ENCODE measurements at regions of chr12 and their contacts with region 1.

Region 1: GRCh38 chr12:110371408-110372055 is 32.0 kb downstream of the ANAPC7 start:
- DNase-seq: no peak
- ATAC-seq: no peak
- H3K4me3 ChIP-seq: no peak overlapping the region
- H3K27ac ChIP-seq: no peak overlapping the region
- H3K4me1 ChIP-seq: peaks cover 9% of the 10 kb centered on the region
- H3K27me3 ChIP-seq: no peaks in the 10 kb centered on the region
- CTCF ChIP-seq: no peak
- POLR2A ChIP-seq: no peak
- RAD21 ChIP-seq: no peak

Region 2: GRCh38 chr12:110330544-110330943 is 41.0 kb before region 1 on chr12:
- CTCF ChIA-PET with region 1: no interaction called
- POLR2A ChIA-PET with region 1: interaction called, 16 read pairs
- dilution Hi-C with region 1: no loop called
- in situ Hi-C with region 1: no loop called
- intact Hi-C with region 1: no loop called
- DNase-seq: peak; percentile 48
- ATAC-seq: peak; percentile 40; the same call in 1 of the 2 replicates
- H3K4me3 ChIP-seq: no peak overlapping the region
- H3K27ac ChIP-seq: no peak overlapping the region
- H3K4me1 ChIP-seq: peaks cover 2% of the 10 kb centered on the region; the same call in 1 of the 2 replicates
- H3K27me3 ChIP-seq: no peaks in the 10 kb centered on the region
- CTCF ChIP-seq: no peak
- POLR2A ChIP-seq: no peak
- RAD21 ChIP-seq: no peak

Region 3: GRCh38 chr12:110357548-110357947 is 14.0 kb before region 1 on chr12:
- CTCF ChIA-PET with region 1: interaction called, 13 read pairs
- POLR2A ChIA-PET with region 1: no interaction called
- dilution Hi-C with region 1: no loop called
- in situ Hi-C with region 1: no loop called
- intact Hi-C with region 1: no loop called
- DNase-seq: no peak
- ATAC-seq: no peak
- H3K4me3 ChIP-seq: no peak overlapping the region
- H3K27ac ChIP-seq: no peak overlapping the region
- H3K4me1 ChIP-seq: no peaks in the 10 kb centered on the region
- H3K27me3 ChIP-seq: no peaks in the 10 kb centered on the region
- CTCF ChIP-seq: no peak
- POLR2A ChIP-seq: no peak
- RAD21 ChIP-seq: no peak